ENCODE measurements at regions of chr7 and their contacts with region 1.

Region 1: DNA sequence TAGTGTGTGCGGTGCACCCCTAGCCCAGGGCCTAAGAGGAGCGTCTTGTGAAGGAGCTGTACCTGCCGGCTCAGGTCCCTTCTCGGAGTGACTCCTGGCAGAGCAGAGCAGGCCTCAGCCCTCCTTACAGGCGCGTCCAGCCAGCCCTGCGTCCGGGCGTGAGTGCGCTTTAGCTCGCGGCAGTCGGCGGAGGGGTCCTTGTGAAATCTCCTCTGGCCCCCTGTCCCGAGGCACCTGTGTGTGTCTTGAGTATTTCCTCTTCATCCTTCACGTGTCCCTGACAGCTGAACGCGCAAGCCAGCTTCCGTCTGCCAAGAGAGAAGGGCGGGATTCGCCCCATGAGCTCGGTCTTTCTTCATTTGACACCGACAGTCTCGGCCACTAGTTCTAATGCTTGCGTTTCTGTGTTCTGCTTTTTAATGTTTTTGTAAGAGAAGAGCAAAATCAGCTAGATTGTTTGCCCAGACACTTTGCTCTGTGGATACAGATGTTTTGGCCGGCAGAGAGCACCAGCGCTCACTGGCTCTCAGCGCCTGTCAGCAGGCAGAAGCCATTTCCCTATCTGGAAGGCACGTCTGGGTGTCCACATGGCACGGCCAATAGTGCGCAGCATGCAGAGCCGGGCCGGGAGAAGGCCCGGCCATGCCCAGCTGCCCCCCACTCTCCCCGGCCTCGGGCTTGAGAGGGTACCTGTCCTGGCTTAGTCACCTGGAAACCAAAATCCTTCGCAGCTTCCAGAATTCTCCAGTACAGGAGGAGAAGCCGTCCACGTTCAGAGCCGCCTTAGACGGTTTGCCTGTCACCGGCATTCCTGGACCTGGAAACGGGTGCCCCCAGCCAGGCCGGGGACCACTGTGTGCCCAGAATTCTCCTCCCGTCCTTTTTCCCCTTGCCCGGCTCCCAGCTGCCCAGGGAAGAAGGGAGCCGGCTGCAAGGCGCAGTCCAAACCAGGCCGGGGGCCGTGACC is 7.0 kb downstream of the GET4 start:
- DNase-seq: peak in 1 of 2 donors; percentile 25
- ATAC-seq: peak in 6 of 8 donors; percentile 15 to 46 (median 34)
- H3K4me3 ChIP-seq: no peak overlapping the region
- H3K27ac ChIP-seq: peak overlapping the region in 4 of 10 donors; percentile 1 to 31 (median 22)
- H3K4me1 ChIP-seq: peaks cover 20 to 77% (median 53%) of the 10 kb centered on the region in 9 donors
- H3K27me3 ChIP-seq: no peaks in the 10 kb centered on the region
- CTCF ChIP-seq: peak in 3 of 9 donors; percentile 9 to 29 (median 18)

Region 2: DNA sequence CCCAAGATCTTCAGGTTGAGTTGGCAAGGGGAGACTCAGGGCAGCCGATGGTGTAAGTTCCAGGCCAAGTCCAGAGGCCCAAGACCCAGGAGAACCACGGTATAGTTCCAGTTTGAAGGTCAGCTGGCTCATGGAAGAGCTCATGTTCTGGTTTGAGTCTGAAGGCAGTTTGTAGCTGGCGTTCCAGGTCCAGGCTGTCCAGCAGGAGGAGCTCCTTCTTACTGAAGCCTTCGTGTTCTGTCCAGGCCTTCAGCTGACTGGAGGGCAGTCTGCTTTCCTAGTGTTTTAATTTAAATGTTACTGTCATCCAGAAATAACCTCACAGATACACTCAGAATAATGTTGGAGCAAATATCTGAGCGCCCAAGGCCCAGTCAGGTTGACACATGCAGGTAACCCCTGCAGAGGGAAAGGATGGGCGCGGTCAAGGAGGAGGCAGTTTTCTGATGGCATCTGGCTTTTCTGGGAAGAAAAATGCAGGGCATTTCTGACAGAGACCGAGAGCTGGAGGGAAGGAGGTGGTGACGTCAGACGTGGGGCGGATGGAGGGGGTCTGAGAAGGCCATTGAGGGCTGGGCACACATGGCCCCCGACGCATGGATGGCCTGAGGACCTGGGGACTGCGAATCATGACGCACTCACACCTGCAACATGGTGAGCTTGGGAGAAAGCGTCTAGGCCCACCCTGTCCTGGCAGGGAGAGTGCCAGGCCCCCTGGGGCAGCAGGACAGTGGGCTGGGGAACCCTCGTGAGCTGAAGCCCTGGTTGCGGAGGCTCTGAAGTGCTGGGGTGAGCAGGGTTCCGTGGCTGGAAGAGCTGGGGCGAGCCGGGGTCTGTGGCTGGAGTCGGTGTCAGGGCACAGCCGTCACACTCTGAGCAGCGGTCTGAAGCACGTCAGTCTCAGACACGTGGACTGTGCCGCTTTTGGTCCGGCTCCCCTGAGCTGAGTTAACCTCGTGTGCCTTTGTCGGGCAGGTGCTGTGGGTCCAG is 46.6 kb before region 1 on chr7:
- intact Hi-C with region 1: no loop called
- DNase-seq: no peak
- ATAC-seq: peak; percentile 18 to 68 (median 48)
- H3K4me3 ChIP-seq: no peak overlapping the region
- H3K27ac ChIP-seq: peak overlapping the region; percentile 25 to 97 (median 74)
- H3K4me1 ChIP-seq: peaks cover 24 to 79% (median 56%) of the 10 kb centered on the region in 9 donors
- H3K27me3 ChIP-seq: no peaks in the 10 kb centered on the region
- CTCF ChIP-seq: peak; percentile 28 to 65 (median 55)

Region 3: GRCh38 chr7:964401-965231 is 81.3 kb after region 1 on chr7:
- intact Hi-C with region 1: loop called in 1 of 10 experiments (anchors 10 kb)
- DNase-seq: peak; percentile 23 to 66
- ATAC-seq: peak; percentile 48 to 75 (median 64)
- H3K4me3 ChIP-seq: peak overlapping the region in 2 of 10 donors; percentile 2 to 9
- H3K27ac ChIP-seq: peak overlapping the region; percentile 64 to 91 (median 82)
- H3K4me1 ChIP-seq: peaks cover 21 to 62% (median 44%) of the 10 kb centered on the region in 9 donors
- H3K27me3 ChIP-seq: peaks cover 0 to 4% (median 0%) of the 10 kb centered on the region in 7 donors
- CTCF ChIP-seq: peak in 6 of 9 donors; percentile 22 to 49 (median 30)

Measured in heart right ventricle (tissue), 16 donors.